ENCODE measurements at regions of chr13 and their contacts with region 1.

Region 1: DNA sequence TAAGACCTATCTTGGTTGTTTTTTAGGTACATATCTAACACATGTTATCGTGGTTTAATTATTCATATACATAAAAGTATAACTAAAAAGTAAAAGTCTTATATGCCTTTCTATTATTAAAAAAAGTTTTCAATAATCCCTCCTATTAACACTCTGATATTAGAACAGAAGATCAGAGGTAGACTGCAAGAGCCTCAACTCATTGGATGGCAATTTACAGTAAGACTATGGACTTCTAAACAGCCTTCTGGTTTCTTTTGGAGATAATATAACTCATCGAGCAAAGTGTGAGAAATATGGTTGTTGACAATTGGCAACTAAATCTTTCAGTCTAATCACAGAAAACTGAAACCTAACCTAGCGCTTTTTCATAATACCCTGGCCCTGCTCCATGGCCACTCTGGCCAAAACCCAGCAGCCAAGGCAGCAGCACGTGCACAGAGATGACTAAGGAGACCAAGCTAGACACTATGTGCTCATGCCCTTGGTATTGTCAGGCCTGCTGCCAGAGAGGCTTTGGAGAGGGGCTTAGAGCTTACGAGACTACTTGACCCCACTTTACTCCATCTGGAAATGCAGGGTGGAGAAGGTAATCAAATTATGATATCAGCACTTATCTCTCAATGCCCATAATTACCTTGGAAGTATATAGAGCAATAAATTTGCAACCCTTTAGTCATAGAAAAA is 40.6 kb upstream of the EEF1AKMT1 start:
- DNase-seq: peak; percentile 96
- H3K4me3 Mint-ChIP-seq: peak overlapping the region; percentile 65
- H3K27ac Mint-ChIP-seq: peak overlapping the region; percentile 94
- H3K4me1 Mint-ChIP-seq: peaks cover 43% of the 10 kb centered on the region
- H3K27me3 Mint-ChIP-seq: no peaks in the 10 kb centered on the region
- CTCF ChIP-seq: no peak

Region 2: GRCh38 chr13:20728579-20729311 is 85.6 kb before region 1 on chr13:
- CTCF ChIA-PET with region 1: no interaction called
- POLR2A ChIA-PET with region 1: no interaction called
- intact Hi-C with region 1: no loop called
- DNase-seq: no peak
- H3K4me3 Mint-ChIP-seq: no peak overlapping the region
- H3K27ac Mint-ChIP-seq: no peak overlapping the region
- H3K4me1 Mint-ChIP-seq: no peaks in the 10 kb centered on the region
- H3K27me3 Mint-ChIP-seq: no peaks in the 10 kb centered on the region
- CTCF ChIP-seq: no peak

Region 3: GRCh38 chr13:20773194-20774080 is 40.9 kb before region 1 on chr13 and contains the start of gene EEF1AKMT1:
- CTCF ChIA-PET with region 1: no interaction called
- POLR2A ChIA-PET with region 1: interaction called, 22 read pairs
- intact Hi-C with region 1: loop called (anchors 5 kb)
- DNase-seq: peak; percentile 93
- H3K4me3 Mint-ChIP-seq: peak within 1 kb of the TSS; percentile 83
- H3K27ac Mint-ChIP-seq: peak within 1 kb of the TSS; percentile 93
- H3K4me1 Mint-ChIP-seq: peaks cover 6% of the 10 kb centered on the region
- H3K27me3 Mint-ChIP-seq: no peaks in the 10 kb centered on the region
- CTCF ChIP-seq: no peak
- total RNA-seq, gene EEF1AKMT1: 11.3 and 16.5 TPM in 2 replicates

Measured in MCF 10A (cell line).